A549 (cell line): ENCODE measurements at regions of chr1 and their contacts with region 1.

Region 1: DNA sequence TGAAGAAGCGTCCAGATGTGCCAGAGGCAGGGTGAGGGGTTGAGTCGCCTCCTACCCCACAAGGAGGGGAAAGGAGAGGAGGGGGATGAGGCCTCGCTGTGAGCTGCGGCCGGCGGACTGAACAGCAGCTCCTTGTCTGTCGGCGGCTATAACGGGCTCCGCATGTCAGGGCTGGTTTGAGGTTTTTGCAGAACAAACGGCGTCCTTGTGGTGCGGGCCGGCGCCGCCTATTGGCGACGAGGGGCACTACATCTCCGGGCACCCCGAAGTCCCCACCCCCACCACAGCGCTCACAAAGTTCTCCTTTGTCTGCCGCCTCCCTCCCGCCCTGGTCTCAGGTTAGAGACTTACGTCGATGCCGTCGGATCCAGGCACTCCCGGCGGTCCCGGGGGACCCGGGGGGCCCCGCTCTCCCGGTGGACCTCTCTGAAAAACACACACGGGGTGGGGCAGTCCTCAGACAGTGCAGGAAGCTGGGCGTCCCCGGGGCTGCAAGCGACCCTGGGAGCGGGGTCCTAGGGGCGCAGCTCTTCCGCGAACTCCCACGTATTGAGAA is 1.8 kb downstream of the COL9A2 start:
- DNase-seq: peak; percentile 58 to 81
- ATAC-seq: peak; percentile 75 to 89
- H3K4me3 ChIP-seq: peak overlapping the region; percentile 28; the same call in 2 of the 3 replicates
- H3K27ac ChIP-seq: peak overlapping the region in 1 of 2 experiments; percentile 79; a peak in 2 of 6 replicates
- H3K4me1 ChIP-seq: no peaks in the 10 kb centered on the region
- CTCF ChIP-seq: peak; percentile 59
- EP300 ChIP-seq: no peak
- POLR2A ChIP-seq: no peak
- RAD21 ChIP-seq: peak; percentile 42 to 48

Region 2: GRCh38 chr1:40302971-40303771 is 12.1 kb before region 1 on chr1:
- CTCF ChIA-PET with region 1: interaction called, 10 read pairs
- POLR2A ChIA-PET with region 1: no interaction called
- DNase-seq: no peak
- ATAC-seq: no peak
- H3K4me3 ChIP-seq: no peak overlapping the region
- H3K27ac ChIP-seq: no peak overlapping the region
- H3K4me1 ChIP-seq: no peaks in the 10 kb centered on the region
- CTCF ChIP-seq: no peak
- EP300 ChIP-seq: no peak
- POLR2A ChIP-seq: no peak
- RAD21 ChIP-seq: no peak